Heart right ventricle (tissue), 16 donors: ENCODE measurements at regions of chr10 and their contacts with region 1.

Region 1: DNA sequence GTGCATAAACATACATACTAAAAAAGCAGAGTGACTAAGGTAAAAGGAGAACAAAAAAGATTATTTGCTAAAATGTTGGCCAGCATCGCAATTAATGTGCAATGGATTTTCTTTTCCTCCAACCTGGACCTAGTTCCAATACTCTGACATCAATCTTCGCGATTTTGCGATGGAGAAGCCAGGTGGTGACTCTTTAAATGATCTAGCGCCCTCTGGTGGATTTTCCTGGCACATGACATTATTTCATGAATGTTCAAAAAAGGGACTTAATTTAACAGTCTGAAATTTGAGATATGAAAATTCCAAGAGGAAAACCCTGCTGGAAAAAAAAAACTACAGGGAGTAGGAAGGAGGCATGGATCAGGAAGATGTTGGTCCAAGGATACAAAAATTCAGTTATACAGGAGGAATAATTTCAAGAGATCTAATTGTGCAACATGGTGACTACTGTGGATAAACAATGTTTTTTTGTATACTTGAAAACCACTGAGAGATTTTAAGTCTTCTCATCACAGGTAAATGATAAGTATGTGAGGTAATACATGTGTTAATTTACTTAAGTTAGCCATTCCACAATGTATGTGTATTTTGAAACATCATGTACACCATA is 4.3 kb upstream of the KCNMA1 start:
- DNase-seq: peak in 1 of 2 donors; percentile 66
- ATAC-seq: no peak
- H3K4me3 ChIP-seq: no peak overlapping the region
- H3K27ac ChIP-seq: no peak overlapping the region
- H3K4me1 ChIP-seq: peaks cover 0 to 14% (median 5%) of the 10 kb centered on the region in 9 donors
- H3K27me3 ChIP-seq: peaks cover 8 to 69% (median 50%) of the 10 kb centered on the region in 7 donors
- CTCF ChIP-seq: peak; percentile 67 to 86 (median 81)

Region 2: DNA sequence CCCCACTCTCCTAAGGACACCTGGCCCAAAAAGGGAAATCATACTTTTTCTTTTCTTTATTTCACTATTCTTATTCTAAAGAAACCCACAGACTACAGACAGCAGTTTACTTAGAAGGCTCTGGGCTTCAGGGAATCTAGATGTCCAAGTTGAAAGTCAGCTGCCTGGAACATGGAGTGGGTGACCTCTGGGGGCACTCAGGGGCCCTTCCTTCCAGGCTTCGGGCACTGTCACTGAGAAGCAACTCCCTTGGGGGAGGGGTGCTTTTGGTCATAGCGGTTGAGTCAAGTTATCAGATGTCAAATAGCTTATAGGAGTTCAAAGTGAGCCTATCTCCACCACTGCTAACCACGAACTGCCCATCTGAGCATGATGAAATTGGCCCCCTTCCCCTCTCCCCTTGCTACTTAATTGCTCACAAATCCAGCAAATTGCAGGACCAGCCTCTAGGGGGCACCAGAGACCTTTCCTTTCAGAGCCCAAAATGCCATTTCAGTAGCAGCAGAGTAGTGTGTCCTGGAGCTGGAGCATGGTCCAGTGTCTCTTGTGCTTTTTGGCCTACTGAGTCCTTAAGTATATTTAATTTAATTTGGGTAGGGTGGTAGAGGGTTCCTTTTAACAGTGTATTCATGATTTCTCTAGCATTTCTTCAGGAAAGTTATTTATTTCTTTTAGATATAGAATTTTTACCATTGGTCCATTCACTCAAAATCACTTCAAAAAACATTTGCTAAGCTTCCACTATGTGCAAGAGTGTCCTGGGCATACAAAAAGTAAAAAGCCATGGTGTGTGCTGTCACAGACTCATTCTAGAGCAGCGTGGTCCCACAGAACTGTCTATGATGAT is 468.1 kb before region 1 on chr10:
- intact Hi-C with region 1: loop called (anchors 1 to 5 kb)
- DNase-seq: peak; percentile 43 to 60
- ATAC-seq: peak in 7 of 8 donors; percentile 55 to 75 (median 71)
- H3K4me3 ChIP-seq: no peak overlapping the region
- H3K27ac ChIP-seq: no peak overlapping the region
- H3K4me1 ChIP-seq: no peaks in the 10 kb centered on the region
- H3K27me3 ChIP-seq: peaks cover 0 to 44% (median 13%) of the 10 kb centered on the region in 7 donors
- CTCF ChIP-seq: peak; percentile 68 to 98 (median 87)

Region 3: GRCh38 chr10:77240041-77240652 is 401.7 kb before region 1 on chr10:
- intact Hi-C with region 1: loop called in 1 of 10 experiments (anchors 5 kb)
- DNase-seq: no peak
- ATAC-seq: no peak
- H3K4me3 ChIP-seq: no peak overlapping the region
- H3K27ac ChIP-seq: peak overlapping the region in 1 of 10 donors; percentile 21
- H3K4me1 ChIP-seq: peaks cover 0 to 20% (median 0%) of the 10 kb centered on the region in 9 donors
- H3K27me3 ChIP-seq: peaks cover 0 to 3% (median 0%) of the 10 kb centered on the region in 7 donors
- CTCF ChIP-seq: no peak

Region 4: GRCh38 chr10:77391605-77392235 is 250.2 kb before region 1 on chr10:
- intact Hi-C with region 1: loop called (anchors 1 to 10 kb)
- DNase-seq: peak; percentile 60 to 78
- ATAC-seq: peak in 7 of 8 donors; percentile 65 to 82 (median 75)
- H3K4me3 ChIP-seq: no peak overlapping the region
- H3K27ac ChIP-seq: no peak overlapping the region
- H3K4me1 ChIP-seq: peaks cover 0 to 29% (median 12%) of the 10 kb centered on the region in 9 donors
- H3K27me3 ChIP-seq: peaks cover 0 to 23% (median 3%) of the 10 kb centered on the region in 7 donors
- CTCF ChIP-seq: peak in 8 of 9 donors; percentile 15 to 62 (median 56)

Region 5: DNA sequence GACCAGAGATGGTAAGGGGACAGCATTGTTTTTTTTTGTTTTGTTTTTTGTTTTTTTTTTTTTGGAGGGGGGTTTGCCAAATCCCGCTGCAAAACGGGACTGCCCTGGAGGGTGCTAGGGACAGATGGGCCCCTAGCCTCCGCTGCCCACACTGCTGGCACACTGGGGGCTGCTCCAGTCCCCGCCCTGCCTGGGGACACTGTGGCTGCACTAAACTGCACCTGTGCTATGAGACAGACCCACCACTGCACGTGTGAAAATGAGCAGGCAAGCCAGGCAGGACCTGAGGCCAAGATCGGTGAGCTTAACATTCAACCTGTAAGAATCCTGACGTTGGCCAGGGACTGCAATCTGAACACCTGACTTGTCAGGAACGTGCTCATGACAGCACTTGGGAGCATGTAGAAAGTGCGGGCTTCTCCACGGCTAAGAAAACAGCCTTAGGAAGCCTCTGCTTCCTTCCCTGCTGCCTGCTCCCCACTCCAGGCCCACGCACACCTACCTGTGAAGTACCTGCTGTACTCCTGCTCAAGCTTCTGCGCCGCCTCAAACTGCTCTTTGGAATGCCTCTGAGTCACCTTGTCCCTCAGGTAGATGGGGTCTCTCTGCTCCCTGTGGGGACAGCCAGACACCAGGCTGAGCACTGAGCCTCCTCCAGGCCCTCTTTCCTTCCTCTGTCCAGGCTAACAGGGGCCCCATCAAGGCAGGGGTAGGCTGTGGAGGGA is 151.8 kb after region 1 on chr10:
- intact Hi-C with region 1: no loop called
- DNase-seq: no peak
- ATAC-seq: no peak
- H3K4me3 ChIP-seq: no peak overlapping the region
- H3K27ac ChIP-seq: no peak overlapping the region
- H3K4me1 ChIP-seq: no peaks in the 10 kb centered on the region
- H3K27me3 ChIP-seq: no peaks in the 10 kb centered on the region
- CTCF ChIP-seq: no peak